ENCODE measurements at regions of chr6 and their contacts with region 1.

Region 1: DNA sequence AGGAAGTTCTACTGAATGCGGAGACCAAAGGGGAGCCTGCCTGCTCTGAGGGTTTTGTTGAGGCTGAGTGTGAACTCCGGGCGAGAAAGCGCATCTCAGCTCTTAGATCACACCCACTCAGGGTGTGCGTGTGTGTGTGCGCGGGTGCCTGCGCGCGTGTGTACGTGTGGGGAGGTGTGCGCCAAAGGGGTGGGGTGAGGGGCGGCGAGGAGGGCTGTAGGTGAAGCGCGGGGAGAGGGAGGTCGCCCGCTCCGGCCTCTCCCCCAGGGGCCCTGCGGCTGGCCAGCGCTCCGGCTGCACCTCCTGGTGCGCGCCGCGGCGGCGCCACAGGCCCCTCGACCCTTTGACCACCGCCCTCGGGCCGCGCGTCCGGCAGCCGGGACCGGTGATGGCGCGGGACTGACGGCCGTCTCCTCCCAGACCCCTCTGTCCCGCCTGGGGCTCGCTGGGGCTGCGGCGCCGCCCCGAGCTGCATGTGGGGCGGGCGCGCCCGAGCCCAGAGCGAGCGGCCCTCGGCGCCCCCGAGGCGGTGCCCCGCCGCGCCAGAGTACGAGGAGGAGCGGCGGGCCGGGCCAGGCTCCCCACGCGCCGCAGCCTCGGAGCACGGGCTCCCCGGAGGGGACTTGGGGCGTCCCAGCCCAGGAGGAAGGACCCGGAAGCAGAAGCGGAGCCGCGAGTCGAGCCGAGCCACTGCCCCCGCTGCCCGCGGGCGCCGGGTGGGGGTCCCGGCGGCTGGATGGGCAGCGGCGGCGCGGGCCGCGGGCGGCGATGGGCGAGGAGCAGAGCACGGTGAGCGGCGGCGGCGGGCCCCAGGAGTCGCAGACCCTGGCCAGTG is at the start of gene RNF217:
- DNase-seq: peak; percentile 62
- H3K4me3 ChIP-seq: peak within 1 kb of the TSS; percentile 74 to 87 (median 87)
- H3K27ac ChIP-seq: peak within 1 kb of the TSS; percentile 87
- H3K4me1 ChIP-seq: peaks cover 43% of the 10 kb centered on the region
- H3K27me3 ChIP-seq: no peaks in the 10 kb centered on the region
- CTCF ChIP-seq: no peak
- total RNA-seq, gene RNF217: 53.9 to 103 TPM

Region 2: GRCh38 chr6:124870611-124871459 is 91.2 kb before region 1 on chr6:
- CTCF ChIA-PET with region 1: no interaction called
- dilution Hi-C with region 1: no loop called
- in situ Hi-C with region 1: no loop called
- intact Hi-C with region 1: loop called (anchors 1 kb)
- DNase-seq: peak; percentile 12
- H3K4me3 ChIP-seq: no peak overlapping the region
- H3K27ac ChIP-seq: no peak overlapping the region
- H3K4me1 ChIP-seq: peaks cover 5% of the 10 kb centered on the region
- H3K27me3 ChIP-seq: no peaks in the 10 kb centered on the region
- CTCF ChIP-seq: peak; percentile 54 to 63

Region 3: DNA sequence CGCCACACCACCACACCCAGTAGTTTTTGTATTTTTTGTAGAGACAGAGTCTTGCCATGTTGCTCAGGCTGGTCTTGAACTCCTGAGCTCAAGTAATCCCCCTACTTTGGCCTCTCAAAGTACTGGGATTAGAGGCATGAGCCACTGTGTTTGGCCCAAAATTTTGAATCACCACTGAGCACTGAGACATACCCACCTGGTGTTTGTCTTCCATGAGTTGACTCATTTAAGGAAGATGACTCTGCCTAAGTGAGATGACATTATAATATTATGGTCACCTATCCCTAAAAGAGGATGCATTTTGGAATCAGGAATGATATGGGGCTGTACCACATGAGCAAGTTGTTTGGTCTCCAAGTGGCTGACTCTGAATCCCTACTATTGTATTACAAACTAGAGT is 54.4 kb before region 1 on chr6:
- CTCF ChIA-PET with region 1: no interaction called
- dilution Hi-C with region 1: no loop called
- in situ Hi-C with region 1: no loop called
- intact Hi-C with region 1: no loop called
- DNase-seq: no peak
- H3K4me3 ChIP-seq: no peak overlapping the region
- H3K27ac ChIP-seq: no peak overlapping the region
- H3K4me1 ChIP-seq: peaks cover 4% of the 10 kb centered on the region
- H3K27me3 ChIP-seq: no peaks in the 10 kb centered on the region
- CTCF ChIP-seq: no peak

Region 4: DNA sequence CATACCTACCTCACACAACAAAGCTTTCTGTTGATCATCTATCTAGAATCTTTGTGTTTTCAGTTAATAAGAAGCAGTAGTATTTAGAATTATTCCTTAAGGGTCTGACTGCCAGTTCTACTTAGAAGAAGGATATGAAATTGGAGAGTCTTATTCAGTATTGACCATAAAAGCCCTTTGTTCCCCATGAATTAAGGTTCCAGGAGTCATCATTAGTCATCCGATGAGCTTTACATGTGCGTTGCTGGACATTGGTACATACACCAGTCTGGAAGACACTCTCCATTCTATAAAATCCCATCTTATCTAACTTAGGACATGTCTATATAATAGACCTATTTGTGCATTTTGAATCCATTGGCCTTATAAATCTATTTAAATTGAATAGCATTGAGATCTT is 34.2 kb before region 1 on chr6:
- CTCF ChIA-PET with region 1: no interaction called
- dilution Hi-C with region 1: no loop called
- in situ Hi-C with region 1: no loop called
- intact Hi-C with region 1: loop called (anchors 2 kb)
- DNase-seq: peak; percentile 91
- H3K4me3 ChIP-seq: no peak overlapping the region
- H3K27ac ChIP-seq: peak overlapping the region; percentile 94
- H3K4me1 ChIP-seq: peaks cover 36% of the 10 kb centered on the region
- H3K27me3 ChIP-seq: no peaks in the 10 kb centered on the region
- CTCF ChIP-seq: no peak

Region 5: DNA sequence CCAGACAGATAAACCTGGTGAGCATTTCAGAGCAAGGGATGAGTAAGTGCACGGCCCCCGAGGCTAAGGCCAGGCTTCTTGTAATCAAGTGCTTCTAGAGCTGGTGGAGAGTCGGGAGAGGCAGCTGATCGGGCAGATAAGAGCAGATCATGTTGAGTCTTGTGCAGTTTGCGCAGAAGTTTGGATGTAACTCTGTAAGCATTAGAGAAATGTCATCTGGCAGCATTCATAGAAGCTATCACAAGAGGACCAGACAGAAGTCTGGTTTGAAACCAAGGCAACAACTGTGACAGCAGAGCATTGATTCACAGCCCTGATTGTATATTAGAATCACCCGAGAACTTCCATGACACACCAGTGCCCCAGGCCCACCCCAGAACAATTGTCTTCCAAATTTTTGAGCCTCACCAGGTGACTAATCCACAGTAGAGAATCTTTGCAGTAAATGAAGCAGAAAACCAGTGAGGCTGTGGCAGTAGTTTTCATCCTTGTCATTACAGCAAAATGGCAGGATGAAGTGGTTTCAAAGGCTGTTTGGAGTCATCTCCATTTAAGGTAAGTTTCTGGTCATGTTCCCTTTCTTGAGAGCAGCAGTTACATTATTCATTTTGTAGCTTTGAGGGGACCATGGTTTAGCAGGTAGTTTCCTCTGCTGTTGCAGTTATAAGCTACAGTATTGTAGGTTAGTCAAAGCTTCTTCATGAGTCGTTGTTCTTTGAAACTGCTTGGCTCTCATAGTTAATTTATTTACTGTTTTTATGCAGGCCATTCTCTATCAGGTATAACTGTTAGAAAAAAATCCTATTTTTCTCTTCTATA is 84.3 kb after region 1 on chr6:
- CTCF ChIA-PET with region 1: interaction called, 3 read pairs
- dilution Hi-C with region 1: loop called (anchors 5 kb)
- in situ Hi-C with region 1: no loop called
- intact Hi-C with region 1: loop called (anchors 1 kb)
- DNase-seq: peak; percentile 100
- H3K4me3 ChIP-seq: peak overlapping the region; percentile 26 to 40 (median 29)
- H3K27ac ChIP-seq: peak overlapping the region; percentile 98
- H3K4me1 ChIP-seq: peaks cover 70% of the 10 kb centered on the region
- H3K27me3 ChIP-seq: no peaks in the 10 kb centered on the region
- CTCF ChIP-seq: no peak

Region 6: GRCh38 chr6:125114248-125114858 is 152.4 kb after region 1 on chr6:
- CTCF ChIA-PET with region 1: interaction called, 3 read pairs
- dilution Hi-C with region 1: loop called (anchors 25 kb)
- in situ Hi-C with region 1: loop called in 1 of 2 experiments (anchors 10 kb)
- intact Hi-C with region 1: loop called (anchors 1 kb)
- DNase-seq: peak; percentile 35
- H3K4me3 ChIP-seq: no peak overlapping the region
- H3K27ac ChIP-seq: no peak overlapping the region
- H3K4me1 ChIP-seq: peaks cover 11% of the 10 kb centered on the region
- H3K27me3 ChIP-seq: no peaks in the 10 kb centered on the region
- CTCF ChIP-seq: peak; percentile 80 to 94